Caco-2 (cell line): ENCODE measurements at regions of chr4 and their contacts with region 1.

Region 1: GRCh38 chr4:20251796-20252655 is at the start of gene SLIT2:
- DNase-seq: peak; percentile 78 to 84
- H3K4me3 ChIP-seq: peak within 1 kb of the TSS; percentile 46
- H3K4me3 Mint-ChIP-seq: peak within 1 kb of the TSS; percentile 72
- H3K27ac Mint-ChIP-seq: no peak within 1 kb of the TSS
- H3K4me1 ChIP-seq: no peaks in the 10 kb centered on the region
- H3K4me1 Mint-ChIP-seq: no peaks in the 10 kb centered on the region
- H3K27me3 ChIP-seq: no peaks in the 10 kb centered on the region; the same call in 1 of the 2 replicates
- H3K27me3 Mint-ChIP-seq: peaks cover 13% of the 10 kb centered on the region
- CTCF ChIP-seq: peak in 1 of 2 experiments; percentile 36
- total RNA-seq, gene SLIT2: 0.68 and 0.72 TPM in 2 replicates

Region 2: GRCh38 chr4:19224820-19225219 is 1027.2 kb before region 1 on chr4:
- CTCF ChIA-PET with region 1: no interaction called
- POLR2A ChIA-PET with region 1: no interaction called
- intact Hi-C with region 1: loop called (anchors 2 kb)
- DNase-seq: no peak
- H3K4me3 ChIP-seq: no peak overlapping the region
- H3K4me3 Mint-ChIP-seq: no peak overlapping the region
- H3K27ac Mint-ChIP-seq: no peak overlapping the region
- H3K4me1 ChIP-seq: no peaks in the 10 kb centered on the region
- H3K4me1 Mint-ChIP-seq: no peaks in the 10 kb centered on the region
- H3K27me3 ChIP-seq: no peaks in the 10 kb centered on the region
- H3K27me3 Mint-ChIP-seq: no peaks in the 10 kb centered on the region
- CTCF ChIP-seq: no peak

Region 3: DNA sequence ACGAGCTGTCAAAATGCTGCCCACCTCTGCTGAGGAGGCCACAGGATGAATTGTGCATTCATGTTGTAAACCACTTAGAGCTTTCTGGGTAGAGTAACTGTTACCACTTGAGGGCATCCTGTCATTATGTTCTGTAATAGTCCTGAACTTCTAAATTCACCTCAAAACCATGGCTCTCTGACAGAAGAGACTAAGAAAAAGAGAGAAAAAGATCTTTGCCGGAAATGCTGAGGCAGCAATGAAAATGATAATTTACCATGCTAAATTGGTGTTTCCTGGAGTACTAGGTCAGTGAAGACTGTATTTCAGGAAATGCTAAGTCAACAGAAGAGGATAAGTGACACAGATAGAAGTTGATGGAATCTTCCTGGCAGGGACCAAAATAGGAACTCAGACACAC is 942.6 kb before region 1 on chr4:
- CTCF ChIA-PET with region 1: no interaction called
- POLR2A ChIA-PET with region 1: no interaction called
- intact Hi-C with region 1: loop called (anchors 1 kb)
- DNase-seq: peak in 1 of 2 experiments; percentile 7
- H3K4me3 ChIP-seq: no peak overlapping the region
- H3K4me3 Mint-ChIP-seq: no peak overlapping the region
- H3K27ac Mint-ChIP-seq: no peak overlapping the region
- H3K4me1 ChIP-seq: no peaks in the 10 kb centered on the region
- H3K4me1 Mint-ChIP-seq: no peaks in the 10 kb centered on the region
- H3K27me3 ChIP-seq: no peaks in the 10 kb centered on the region
- H3K27me3 Mint-ChIP-seq: no peaks in the 10 kb centered on the region
- CTCF ChIP-seq: no peak

Region 4: DNA sequence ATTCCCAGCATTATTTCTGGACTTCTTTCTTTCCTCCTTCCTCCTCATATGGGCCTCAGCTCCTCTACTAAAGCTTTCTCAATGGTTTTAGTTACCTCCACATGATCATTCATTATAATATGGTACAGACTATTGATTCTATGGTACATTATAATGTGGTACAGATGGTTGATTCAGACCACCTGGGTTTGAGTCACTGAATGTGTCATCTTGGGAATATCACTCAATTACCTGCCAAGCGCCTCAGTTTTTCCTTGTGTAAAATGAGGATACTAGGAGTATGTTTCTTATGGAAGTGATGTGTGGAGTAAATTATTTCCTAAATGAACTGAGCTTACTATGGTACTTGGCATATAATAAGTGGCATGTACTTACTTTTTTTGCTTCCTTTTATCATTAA is 27.4 kb after region 1 on chr4:
- CTCF ChIA-PET with region 1: no interaction called
- POLR2A ChIA-PET with region 1: no interaction called
- intact Hi-C with region 1: loop called (anchors 1 kb)
- DNase-seq: no peak
- H3K4me3 ChIP-seq: no peak overlapping the region
- H3K4me3 Mint-ChIP-seq: no peak overlapping the region
- H3K27ac Mint-ChIP-seq: no peak overlapping the region
- H3K4me1 ChIP-seq: no peaks in the 10 kb centered on the region
- H3K4me1 Mint-ChIP-seq: no peaks in the 10 kb centered on the region
- H3K27me3 ChIP-seq: no peaks in the 10 kb centered on the region
- H3K27me3 Mint-ChIP-seq: no peaks in the 10 kb centered on the region
- CTCF ChIP-seq: no peak